Right ventricle myocardium inferior (tissue), 1 donor: ENCODE measurements at regions of chr11 and their contacts with region 1.

Region 1: GRCh38 chr11:18731949-18732821 is 6.2 kb upstream of the IGSF22 start:
- DNase-seq: no peak
- ATAC-seq: peak; percentile 60

Region 2: DNA sequence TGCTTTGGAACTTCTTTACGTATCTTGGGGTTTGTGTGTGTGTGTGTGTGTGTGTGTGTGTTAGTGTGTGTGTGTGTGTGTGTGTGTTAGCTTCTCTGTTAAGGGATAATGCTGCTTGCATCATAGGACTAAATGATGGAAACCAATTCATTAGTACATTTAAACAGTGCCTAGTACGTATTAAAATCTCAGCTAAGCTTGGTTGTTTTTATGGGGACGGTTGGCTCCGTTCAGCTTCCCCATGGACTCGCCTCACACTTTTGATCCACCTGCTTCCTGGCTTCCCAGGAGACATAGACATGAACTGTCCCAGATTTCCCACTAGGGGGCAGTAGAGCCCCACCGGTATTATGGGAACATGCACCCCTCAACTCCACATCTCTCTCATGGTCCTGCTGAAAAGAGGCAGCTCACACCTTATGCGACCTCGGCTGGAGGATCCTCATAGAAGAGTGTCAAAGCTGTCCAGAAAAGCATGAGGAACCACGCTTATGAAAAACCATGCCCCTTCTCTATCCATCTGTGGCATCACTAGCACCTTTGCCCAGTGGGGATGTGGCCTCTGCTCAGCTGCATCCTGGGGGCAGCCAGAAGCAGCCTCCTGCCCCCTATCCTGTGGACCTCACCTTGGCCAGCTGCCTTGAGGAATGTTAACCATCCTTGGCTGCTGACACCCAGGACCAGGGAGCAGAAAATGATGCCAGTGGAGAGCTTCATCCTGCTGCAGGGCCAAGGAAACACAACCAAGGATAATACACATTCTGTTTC is 616.6 kb before region 1 on chr11:
- intact Hi-C with region 1: loop called (anchors 10 kb)
- DNase-seq: peak; percentile 63
- ATAC-seq: peak; percentile 59

Region 3: DNA sequence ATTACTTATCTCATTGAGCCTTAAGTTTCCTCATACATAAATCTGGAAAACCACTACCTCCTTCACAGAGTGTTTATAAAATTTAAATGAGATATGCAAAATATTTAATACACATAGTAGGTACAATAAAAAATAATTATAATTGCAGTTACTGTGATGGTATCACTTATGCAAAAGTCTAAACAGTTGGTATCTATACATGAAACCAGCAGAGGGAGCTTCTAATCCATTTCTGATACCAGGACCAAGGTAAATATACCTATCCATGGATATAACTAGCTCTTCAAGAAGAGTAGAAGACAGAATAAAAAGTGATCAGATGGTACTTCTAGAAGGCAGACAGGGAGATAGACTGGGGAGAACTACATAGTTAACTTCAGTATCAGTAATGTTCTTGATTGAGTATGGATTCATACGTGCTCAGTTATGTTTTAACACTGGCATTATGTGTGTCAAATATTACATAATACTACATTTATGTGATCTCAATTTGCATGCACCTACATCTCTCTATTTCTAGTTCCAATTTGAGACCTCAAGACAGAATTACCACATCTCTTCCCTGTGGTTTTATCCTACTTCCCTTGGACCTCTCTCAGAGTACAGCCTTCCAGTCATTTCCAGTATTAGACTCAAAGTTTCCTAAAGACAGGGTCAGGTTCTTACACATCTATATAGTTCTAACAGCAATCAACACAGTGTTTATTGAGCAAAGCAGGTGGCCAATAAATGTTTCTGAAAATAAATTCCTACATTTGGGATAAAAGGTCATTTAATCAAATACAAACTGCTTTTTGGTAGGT is 191.8 kb before region 1 on chr11:
- intact Hi-C with region 1: loop called (anchors 2 kb)
- DNase-seq: no peak
- ATAC-seq: no peak

Region 4: DNA sequence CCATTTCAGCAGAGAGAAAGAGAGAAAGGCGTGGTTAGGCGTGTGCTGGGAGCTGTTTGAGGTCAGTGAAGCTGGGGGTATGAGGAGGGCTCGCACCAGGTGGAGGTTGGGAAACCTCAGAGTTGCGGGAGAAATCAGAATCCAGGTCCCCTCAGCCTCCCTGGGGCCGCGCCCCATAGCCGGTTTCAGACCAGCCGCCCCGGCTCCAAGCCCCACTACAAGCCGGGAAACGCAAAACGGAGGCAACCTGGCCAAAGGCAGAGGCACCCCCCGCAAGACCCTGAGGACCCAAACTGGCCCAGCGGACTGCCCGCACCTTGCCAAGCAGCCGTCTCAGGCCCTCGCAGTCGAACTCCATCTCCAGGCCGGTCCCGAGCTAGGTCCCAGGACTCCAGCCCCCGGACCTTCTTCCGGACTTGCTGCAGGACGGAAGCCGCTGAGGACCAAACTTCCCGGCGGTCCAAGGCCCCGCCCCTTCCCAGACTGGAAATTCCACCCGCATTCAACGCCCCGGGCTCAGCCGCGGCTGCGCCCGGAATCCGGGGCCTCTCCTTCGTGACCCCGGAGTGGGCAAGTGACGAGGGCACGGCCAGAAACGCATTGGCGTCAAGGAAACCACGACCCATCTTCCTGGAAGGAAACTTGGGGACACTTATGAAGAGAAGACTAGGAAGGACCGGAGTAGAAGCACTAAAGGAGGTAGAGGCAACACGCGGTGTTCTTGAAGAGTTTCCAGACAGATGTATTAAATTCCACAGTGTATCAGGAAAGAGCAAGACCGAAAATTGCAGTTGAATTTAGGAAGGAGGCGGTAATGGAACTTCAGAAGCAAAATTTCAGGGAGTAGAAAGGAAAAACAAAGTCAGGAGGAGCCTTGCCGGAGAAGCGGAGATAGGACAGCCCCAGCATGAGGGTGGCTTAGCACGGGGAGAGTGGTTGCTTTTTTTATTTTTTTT is 143.6 kb before region 1 on chr11 and contains the start of gene UEVLD:
- intact Hi-C with region 1: loop called (anchors 5 kb)
- DNase-seq: peak; percentile 93
- ATAC-seq: peak; percentile 98
- total RNA-seq, gene UEVLD: 18.0 TPM